ENCODE measurements at regions of chr2 and their contacts with region 1.

Region 1: DNA sequence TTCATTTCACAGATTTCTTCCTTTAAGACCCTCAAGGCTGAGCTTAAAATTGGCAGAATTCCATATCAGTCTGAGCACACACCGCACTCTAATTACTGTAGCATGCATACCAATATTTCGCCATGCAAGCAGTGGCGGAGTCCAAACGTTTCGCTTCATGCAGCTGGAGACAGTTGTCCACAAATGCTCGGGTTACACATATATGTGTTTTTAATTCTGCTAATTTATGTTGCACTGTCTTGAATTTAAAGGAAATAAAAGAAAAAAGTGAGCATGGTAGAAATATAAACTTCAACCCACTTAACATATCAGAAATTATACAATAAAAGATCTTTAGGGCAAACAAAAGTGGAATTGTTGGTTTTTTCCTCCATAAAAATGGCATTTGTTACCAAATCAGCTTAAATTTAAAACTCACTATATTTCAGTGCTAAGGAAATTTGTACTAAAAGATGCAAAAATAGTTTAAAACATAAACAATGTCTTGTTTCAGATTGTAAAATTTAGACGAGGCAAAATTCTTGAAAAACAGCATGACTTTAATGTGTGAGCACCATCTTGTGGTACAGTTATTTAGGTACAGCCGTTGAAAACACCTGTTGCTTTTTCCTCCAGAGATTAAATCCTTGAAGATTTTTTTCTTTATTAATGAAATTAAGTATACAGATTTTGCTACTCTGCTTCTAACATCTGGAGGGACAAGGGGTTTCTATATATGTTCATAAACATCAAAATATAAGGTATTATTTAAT is 24.1 kb upstream of the KANSL1L start:
- DNase-seq: no peak
- ATAC-seq: no peak
- H3K4me3 ChIP-seq: no peak overlapping the region
- H3K27ac ChIP-seq: no peak overlapping the region
- H3K4me1 ChIP-seq: no peaks in the 10 kb centered on the region
- H3K27me3 ChIP-seq: no peaks in the 10 kb centered on the region

Region 2: DNA sequence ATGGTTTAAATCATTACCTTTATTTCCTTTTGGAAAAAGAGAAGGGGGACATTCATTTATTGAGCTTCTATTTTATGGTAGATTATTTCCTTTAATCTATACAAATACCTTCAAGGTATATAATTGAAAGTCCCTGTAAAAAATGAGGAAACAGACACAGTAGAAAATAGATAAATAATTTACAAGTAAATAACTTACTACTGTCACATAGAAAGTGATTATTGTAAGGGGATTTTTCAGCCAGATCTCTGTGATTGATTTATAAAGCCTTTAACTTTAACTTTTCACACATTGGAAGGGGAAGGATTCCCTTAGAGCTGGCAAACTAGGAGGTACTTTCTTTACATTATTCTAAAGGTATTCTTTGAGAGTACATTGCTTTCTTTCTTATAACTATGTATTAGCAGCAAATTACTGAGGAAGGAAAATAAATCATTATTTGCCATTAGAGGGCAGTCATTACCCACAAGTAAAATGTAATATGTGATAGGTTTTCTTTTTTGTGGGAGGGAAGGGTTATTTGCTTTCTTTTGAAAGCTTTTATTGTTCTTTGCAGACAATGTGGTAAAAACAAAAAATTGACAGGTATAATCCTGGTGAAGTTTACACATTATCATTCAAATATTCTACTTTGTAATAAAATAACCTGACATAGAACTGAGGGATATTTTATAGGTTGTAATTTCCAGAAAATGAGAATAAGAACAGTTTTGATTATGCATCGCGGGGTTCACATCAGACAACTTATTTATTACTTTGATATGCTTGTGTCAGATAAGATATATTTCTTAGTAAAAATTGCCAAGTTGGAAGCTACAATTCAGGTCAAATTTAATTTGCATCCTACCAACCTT is 217.7 kb before region 1 on chr2:
- intact Hi-C with region 1: loop called (anchors 5 kb)
- DNase-seq: no peak
- ATAC-seq: no peak
- H3K4me3 ChIP-seq: no peak overlapping the region
- H3K27ac ChIP-seq: no peak overlapping the region
- H3K4me1 ChIP-seq: no peaks in the 10 kb centered on the region
- H3K27me3 ChIP-seq: no peaks in the 10 kb centered on the region

Region 3: GRCh38 chr2:210072922-210073509 is 122.3 kb before region 1 on chr2:
- intact Hi-C with region 1: loop called (anchors 5 kb)
- DNase-seq: no peak
- ATAC-seq: no peak
- H3K4me3 ChIP-seq: no peak overlapping the region
- H3K27ac ChIP-seq: no peak overlapping the region
- H3K4me1 ChIP-seq: no peaks in the 10 kb centered on the region
- H3K27me3 ChIP-seq: no peaks in the 10 kb centered on the region